Mammary epithelial cell (primary cell): ENCODE measurements at regions of chr14 and their contacts with region 1.

Region 1: DNA sequence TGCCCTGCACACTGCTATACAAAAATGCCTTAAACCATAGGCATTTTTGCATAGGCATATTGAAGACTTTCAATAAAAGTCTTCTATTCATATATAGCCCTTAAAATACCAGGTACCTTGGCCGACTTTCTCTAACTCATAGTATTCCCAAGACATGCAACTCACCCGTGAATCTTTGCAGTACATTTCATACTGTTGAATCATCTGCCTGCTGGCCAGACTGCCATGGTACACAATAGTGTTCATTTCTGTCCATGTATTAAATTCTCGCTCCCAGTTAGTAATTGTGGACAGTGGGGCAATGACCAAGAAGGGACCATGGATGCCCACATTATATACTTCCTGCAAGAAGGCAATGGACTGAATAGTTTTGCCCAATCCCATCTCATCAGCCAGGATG is 24.3 kb upstream of the SUPT16H start:
- DNase-seq: peak; percentile 47
- H3K4me3 ChIP-seq: no peak overlapping the region
- H3K27ac ChIP-seq: no peak overlapping the region
- H3K4me1 ChIP-seq: no peaks in the 10 kb centered on the region
- H3K27me3 ChIP-seq: no peaks in the 10 kb centered on the region
- CTCF ChIP-seq: no peak

Region 2: DNA sequence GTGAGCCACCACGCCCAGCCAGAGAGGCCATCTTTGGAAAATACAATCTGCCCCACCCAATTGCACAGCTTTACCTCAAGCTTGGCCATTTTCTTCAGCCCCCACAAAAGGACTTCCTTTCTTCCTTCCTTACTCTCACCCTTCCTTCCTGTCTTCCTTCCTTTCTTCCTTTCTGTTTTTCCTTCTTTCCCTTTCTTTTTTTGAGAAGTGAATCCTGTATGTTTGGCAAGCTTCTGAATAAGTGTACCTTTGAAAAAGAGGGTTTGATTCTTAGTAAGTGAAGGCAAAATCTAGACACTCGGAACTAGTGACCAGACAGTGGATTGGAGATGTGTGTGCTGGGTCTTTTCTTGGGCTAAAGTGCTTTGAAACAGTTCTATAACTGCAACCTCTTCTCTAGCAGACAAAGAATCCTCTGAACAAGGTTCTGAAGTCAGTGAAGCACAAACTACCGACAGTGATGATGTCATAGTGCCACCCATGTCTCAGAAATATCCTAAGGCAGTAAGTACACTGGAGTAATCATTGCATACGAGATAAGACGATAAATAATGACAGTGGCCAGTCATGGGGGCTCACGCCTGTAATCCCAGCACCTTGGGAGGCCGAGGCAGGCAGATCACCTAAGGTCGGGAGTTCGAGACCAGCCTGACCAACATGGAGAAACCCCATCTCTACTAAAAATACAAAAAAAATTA is 73.8 kb before region 1 on chr14:
- CTCF ChIA-PET with region 1: no interaction called
- dilution Hi-C with region 1: loop called (anchors 5 kb)
- in situ Hi-C with region 1: no loop called
- intact Hi-C with region 1: no loop called
- DNase-seq: no peak
- H3K4me3 ChIP-seq: no peak overlapping the region
- H3K27ac ChIP-seq: no peak overlapping the region
- H3K4me1 ChIP-seq: no peaks in the 10 kb centered on the region
- H3K27me3 ChIP-seq: no peaks in the 10 kb centered on the region
- CTCF ChIP-seq: no peak

Region 3: DNA sequence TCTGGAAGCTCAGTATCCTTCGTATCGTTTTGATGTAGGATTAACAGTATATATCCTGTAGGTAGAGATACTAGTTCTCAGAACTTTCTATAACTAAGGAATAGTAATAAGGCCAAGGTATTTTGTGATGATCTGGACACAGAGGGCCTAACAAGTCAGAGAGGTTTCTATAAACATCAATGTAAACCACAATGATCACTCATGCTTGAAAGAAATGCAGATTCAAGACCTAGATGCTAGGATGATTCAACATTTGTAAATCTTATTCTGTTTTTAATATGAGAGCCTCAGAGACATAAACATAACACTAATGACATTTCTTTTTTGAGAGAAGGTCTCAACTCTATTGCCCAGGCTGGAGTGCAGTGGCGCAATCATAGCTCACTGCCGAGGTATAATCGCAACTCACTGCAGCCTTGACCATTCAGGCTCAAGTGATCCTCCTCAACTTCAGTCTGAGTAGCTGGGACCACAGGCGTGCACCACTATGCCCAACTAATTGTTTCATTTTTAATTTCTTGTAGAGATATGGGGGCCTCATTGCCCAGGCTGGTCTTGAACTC is 40.5 kb before region 1 on chr14:
- CTCF ChIA-PET with region 1: no interaction called
- dilution Hi-C with region 1: loop called (anchors 5 kb)
- in situ Hi-C with region 1: no loop called
- intact Hi-C with region 1: no loop called
- DNase-seq: no peak
- H3K4me3 ChIP-seq: no peak overlapping the region
- H3K27ac ChIP-seq: no peak overlapping the region
- H3K4me1 ChIP-seq: no peaks in the 10 kb centered on the region
- H3K27me3 ChIP-seq: no peaks in the 10 kb centered on the region
- CTCF ChIP-seq: no peak

Region 4: GRCh38 chr14:21440859-21441258 is 32.7 kb after region 1 on chr14:
- CTCF ChIA-PET with region 1: no interaction called
- dilution Hi-C with region 1: no loop called
- in situ Hi-C with region 1: no loop called
- intact Hi-C with region 1: no loop called
- DNase-seq: no peak
- H3K4me3 ChIP-seq: no peak overlapping the region
- H3K27ac ChIP-seq: no peak overlapping the region
- H3K4me1 ChIP-seq: peaks cover 7% of the 10 kb centered on the region
- H3K27me3 ChIP-seq: no peaks in the 10 kb centered on the region
- CTCF ChIP-seq: no peak

Region 5: GRCh38 chr14:21467616-21468015 is 59.5 kb after region 1 on chr14:
- CTCF ChIA-PET with region 1: no interaction called
- dilution Hi-C with region 1: loop called (anchors 5 kb)
- in situ Hi-C with region 1: no loop called
- intact Hi-C with region 1: no loop called
- DNase-seq: peak; percentile 76
- H3K4me3 ChIP-seq: no peak overlapping the region
- H3K27ac ChIP-seq: no peak overlapping the region
- H3K4me1 ChIP-seq: no peaks in the 10 kb centered on the region
- H3K27me3 ChIP-seq: no peaks in the 10 kb centered on the region
- CTCF ChIP-seq: no peak

Region 6: DNA sequence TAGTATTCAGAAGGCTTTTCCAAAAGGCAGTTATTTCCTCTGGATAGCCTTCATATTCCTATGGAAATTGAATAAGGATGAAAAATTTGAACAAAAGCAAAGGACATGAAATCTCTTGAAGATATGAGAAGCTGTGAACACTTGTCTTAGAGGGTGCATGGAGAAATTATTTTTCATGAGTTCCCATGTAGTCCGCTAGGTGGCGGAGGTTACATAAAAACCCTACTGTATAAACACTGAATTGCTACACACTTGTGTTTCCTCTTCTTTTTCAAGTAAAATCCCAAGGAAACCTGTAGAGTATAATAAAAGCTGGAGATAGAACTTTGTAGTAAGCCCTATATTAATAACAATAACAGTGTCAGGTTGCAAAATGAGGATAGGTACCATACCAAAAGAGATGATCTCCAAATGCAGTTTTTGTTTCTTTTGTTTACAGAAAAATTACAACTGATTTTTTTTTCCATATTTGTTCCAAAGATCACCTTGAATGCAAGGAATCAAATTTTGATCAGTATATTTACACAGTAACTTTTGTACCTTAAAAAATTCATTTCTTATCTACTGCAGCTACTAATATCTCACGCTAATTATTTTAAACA is 303.3 kb after region 1 on chr14:
- CTCF ChIA-PET with region 1: no interaction called
- dilution Hi-C with region 1: no loop called
- in situ Hi-C with region 1: no loop called
- intact Hi-C with region 1: no loop called
- DNase-seq: peak; percentile 12
- H3K4me3 ChIP-seq: no peak overlapping the region
- H3K27ac ChIP-seq: no peak overlapping the region
- H3K4me1 ChIP-seq: no peaks in the 10 kb centered on the region
- H3K27me3 ChIP-seq: no peaks in the 10 kb centered on the region
- CTCF ChIP-seq: peak; percentile 71 to 72